ENCODE measurements at regions of chr14 and their contacts with region 1.

Region 1: DNA sequence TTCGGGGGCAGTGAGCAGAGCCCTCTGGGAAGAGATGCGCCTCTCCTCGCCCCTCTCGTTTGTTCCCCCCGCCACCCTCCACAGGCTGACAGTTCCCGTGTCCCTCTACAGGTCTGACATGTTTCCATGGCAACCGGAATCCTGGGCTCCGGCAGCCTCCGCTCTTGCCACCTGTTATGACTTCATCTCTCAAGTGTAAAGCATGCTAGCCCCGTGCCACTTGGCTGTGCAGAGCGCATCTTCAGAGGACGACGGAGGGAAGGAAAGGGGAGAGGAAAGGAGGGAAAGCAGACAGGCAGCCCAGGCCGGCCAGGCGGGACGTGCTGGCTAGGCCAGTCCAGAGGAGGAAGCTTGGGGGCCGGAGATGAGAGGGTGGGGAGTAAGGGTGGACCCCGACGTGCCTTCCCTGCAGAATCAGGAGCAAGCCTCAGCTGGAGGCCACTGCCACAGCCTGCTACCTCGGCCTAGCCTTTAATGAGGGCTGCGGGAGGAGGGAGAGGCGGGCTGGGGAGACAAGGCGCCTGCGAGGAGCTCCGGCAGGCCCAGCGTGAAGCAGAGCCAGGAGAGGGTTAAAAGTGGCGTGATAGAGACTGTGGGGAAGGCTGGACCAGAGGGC is 214.3 kb downstream of the DPF3 start:
- DNase-seq: no peak
- H3K4me3 ChIP-seq: no peak overlapping the region
- CTCF ChIP-seq: no peak

Region 2: GRCh38 chr14:72433521-72433920 is 246.1 kb before region 1 on chr14:
- in situ Hi-C with region 1: no loop called
- DNase-seq: peak; percentile 13
- H3K4me3 ChIP-seq: no peak overlapping the region
- CTCF ChIP-seq: no peak

Region 3: GRCh38 chr14:72715215-72715849 is 35.7 kb after region 1 on chr14:
- in situ Hi-C with region 1: loop called (anchors 5 kb)
- DNase-seq: no peak
- H3K4me3 ChIP-seq: no peak overlapping the region
- CTCF ChIP-seq: no peak

Region 4: DNA sequence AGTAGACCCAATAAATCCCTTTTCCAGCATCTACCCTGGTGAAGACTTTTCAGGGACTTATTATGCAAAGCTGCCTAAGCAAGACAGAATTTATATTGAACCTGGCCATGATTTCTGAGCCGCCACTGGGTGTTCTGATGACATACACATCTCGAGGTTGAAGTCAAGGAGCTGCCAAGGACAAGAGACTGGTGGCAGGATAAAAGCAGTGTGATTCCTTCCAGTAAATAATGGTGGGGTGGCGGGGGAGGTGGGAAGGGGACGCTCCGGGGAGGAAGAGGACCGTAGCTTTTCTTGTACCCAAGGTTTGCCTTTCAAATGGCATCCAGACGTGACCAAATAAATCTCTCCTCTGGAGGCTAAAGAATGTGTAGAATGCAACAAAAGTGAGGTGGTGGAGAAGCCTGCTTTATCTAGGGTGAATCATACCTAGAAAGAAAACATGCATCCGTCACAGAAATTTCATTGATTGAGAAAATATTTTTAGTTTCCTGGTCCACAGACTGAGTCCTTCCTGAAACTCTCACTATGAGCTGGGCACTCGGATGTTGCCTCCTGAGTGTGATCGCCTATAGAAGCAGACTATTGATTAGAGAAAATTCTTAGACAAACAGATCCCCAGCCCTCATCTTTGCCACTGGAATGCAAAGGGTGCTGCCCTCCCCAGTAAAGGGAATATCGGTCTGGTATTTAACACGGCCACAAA is 102.0 kb after region 1 on chr14:
- in situ Hi-C with region 1: no loop called
- DNase-seq: peak; percentile 63
- H3K4me3 ChIP-seq: no peak overlapping the region
- CTCF ChIP-seq: no peak